ENCODE measurements at regions of chr2 and their contacts with region 1.

Region 1: DNA sequence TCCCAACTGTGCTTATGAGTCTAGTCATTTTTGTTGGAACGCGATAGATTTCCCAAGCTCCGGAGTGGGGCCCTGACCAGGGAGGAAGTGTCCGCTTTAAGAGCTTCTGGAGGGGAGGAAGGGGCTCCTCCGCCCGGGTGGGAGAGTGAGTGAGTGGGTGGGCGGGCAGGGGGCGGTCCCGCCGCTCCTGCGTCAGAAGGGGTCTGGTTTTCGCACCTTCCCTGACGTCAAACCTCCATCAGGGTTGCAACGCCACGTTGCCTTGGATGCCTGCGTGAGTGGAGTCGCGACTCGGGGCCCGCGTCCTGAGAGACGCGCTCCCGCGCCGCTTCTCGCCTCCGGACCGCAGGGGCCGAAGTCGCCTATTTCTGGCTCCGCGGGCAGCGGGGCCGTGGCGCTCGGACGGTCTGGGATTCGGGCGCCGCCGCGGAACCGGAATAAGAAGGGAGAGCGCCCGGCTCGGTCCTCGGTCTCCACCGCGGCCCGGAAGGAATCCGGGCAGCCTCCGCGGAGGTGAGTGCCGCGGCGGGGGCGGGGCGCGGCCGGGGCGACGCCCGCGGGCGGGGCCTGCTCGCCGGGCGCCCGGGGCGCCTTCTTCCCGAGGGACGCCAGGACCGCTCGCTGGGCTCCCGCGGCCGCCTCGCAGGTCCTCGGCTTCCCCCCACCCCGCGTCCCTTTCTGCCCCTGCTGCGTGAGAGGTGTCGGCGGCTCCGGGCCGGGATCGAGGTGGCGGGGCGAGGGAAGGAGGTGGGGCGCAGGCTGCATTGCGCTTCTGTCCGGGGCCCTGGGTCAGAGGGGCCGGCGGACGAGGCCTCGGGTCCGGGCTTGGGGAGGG is at the start of gene ZDBF2:
- DNase-seq: peak; percentile 89
- H3K4me3 Mint-ChIP-seq: peak within 1 kb of the TSS; percentile 86
- H3K27ac Mint-ChIP-seq: peak within 1 kb of the TSS; percentile 89
- H3K4me1 Mint-ChIP-seq: peaks cover 11% of the 10 kb centered on the region
- H3K27me3 Mint-ChIP-seq: peaks cover 55% of the 10 kb centered on the region
- total RNA-seq, gene ZDBF2: 9.9 and 10.5 TPM in 2 replicates

Region 2: GRCh38 chr2:206256711-206257200 is 17.9 kb before region 1 on chr2:
- intact Hi-C with region 1: loop called (anchors 2 kb)
- DNase-seq: no peak
- H3K4me3 Mint-ChIP-seq: no peak overlapping the region
- H3K27ac Mint-ChIP-seq: no peak overlapping the region
- H3K4me1 Mint-ChIP-seq: peaks cover 2% of the 10 kb centered on the region
- H3K27me3 Mint-ChIP-seq: peaks cover 67% of the 10 kb centered on the region

Region 3: GRCh38 chr2:206442833-206443734 is 168.4 kb after region 1 on chr2 and contains the start of gene ADAM23:
- intact Hi-C with region 1: loop called (anchors 5 kb)
- DNase-seq: peak; percentile 78
- H3K4me3 Mint-ChIP-seq: peak within 1 kb of the TSS; percentile 82
- H3K27ac Mint-ChIP-seq: peak within 1 kb of the TSS; percentile 80
- H3K4me1 Mint-ChIP-seq: peaks cover 9% of the 10 kb centered on the region
- H3K27me3 Mint-ChIP-seq: peaks cover 78% of the 10 kb centered on the region
- total RNA-seq, gene ADAM23: 0.05 and 0.38 TPM in 2 replicates

Measured in activated CD4-positive, alpha-beta T cell treated with anti-CD3 and anti-CD28 coated beads, Interleukin-2, amount 10 ng/mL, durations not matched to agents 24 days and 14 days (primary cell).